Ascending aorta (tissue), 2 donors: ENCODE measurements at regions of chr1 and their contacts with region 1.

Region 1: GRCh38 chr1:235128456-235129328 is at the start of gene TOMM20:
- DNase-seq: peak; percentile 84 to 98
- H3K4me3 ChIP-seq: peak within 1 kb of the TSS; percentile 60 to 99
- H3K27ac ChIP-seq: peak within 1 kb of the TSS; percentile 86 to 94
- H3K4me1 ChIP-seq: peaks cover 0 to 4% of the 10 kb centered on the region in 2 donors
- H3K27me3 ChIP-seq: no peaks in the 10 kb centered on the region
- CTCF ChIP-seq: peak in 1 of 3 experiments; percentile 3
- total RNA-seq, gene TOMM20: 25.3 TPM

Region 2: GRCh38 chr1:234373064-234373958 is 755.4 kb before region 1 on chr1 and contains the start of gene COA6:
- intact Hi-C with region 1: loop called (anchors 2 kb)
- DNase-seq: peak; percentile 60 to 95
- H3K4me3 ChIP-seq: peak within 1 kb of the TSS; percentile 91 to 92
- H3K27ac ChIP-seq: peak within 1 kb of the TSS; percentile 91 to 97
- H3K4me1 ChIP-seq: peaks cover 3 to 15% of the 10 kb centered on the region in 2 donors
- H3K27me3 ChIP-seq: no peaks in the 10 kb centered on the region
- CTCF ChIP-seq: peak in 1 of 3 experiments; percentile 8
- total RNA-seq, gene COA6: not detected

Region 3: GRCh38 chr1:235105051-235106043 is 23.3 kb before region 1 on chr1:
- intact Hi-C with region 1: loop called (anchors 2 kb)
- DNase-seq: no peak
- H3K4me3 ChIP-seq: no peak overlapping the region
- H3K27ac ChIP-seq: no peak overlapping the region
- H3K4me1 ChIP-seq: peaks cover 0 to 2% of the 10 kb centered on the region in 2 donors
- H3K27me3 ChIP-seq: no peaks in the 10 kb centered on the region
- CTCF ChIP-seq: no peak

Region 4: GRCh38 chr1:235160957-235161684 is 32.4 kb after region 1 on chr1 and contains the start of gene RBM34:
- intact Hi-C with region 1: loop called (anchors 2 kb)
- DNase-seq: peak; percentile 64 to 95
- H3K4me3 ChIP-seq: peak within 1 kb of the TSS; percentile 67 to 86
- H3K27ac ChIP-seq: peak within 1 kb of the TSS; percentile 85
- H3K4me1 ChIP-seq: peaks cover 6 to 9% of the 10 kb centered on the region in 2 donors
- H3K27me3 ChIP-seq: no peaks in the 10 kb centered on the region
- CTCF ChIP-seq: peak in 2 of 3 experiments; percentile 15 to 35
- total RNA-seq, gene RBM34: 53.6 TPM